Activated naive CD4-positive, alpha-beta T cell treated with anti-CD3 and anti-CD28 coated beads, Interleukin-2, amount 10 ng/mL, durations not matched to agents 7 days and 5 days (primary cell): ENCODE measurements at regions of chr18 and their contacts with region 1.

Region 1: GRCh38 chr18:46660955-46661749 is 4.1 kb upstream of the LOXHD1 start:
- DNase-seq: no peak
- H3K4me3 Mint-ChIP-seq: no peak overlapping the region
- H3K27ac Mint-ChIP-seq: no peak overlapping the region
- H3K4me1 Mint-ChIP-seq: no peaks in the 10 kb centered on the region
- H3K27me3 Mint-ChIP-seq: peaks cover 18% of the 10 kb centered on the region

Region 2: GRCh38 chr18:46148810-46149209 is 512.3 kb before region 1 on chr18:
- CTCF ChIA-PET with region 1: interaction called, 50 read pairs
- DNase-seq: peak; percentile 69
- H3K4me3 Mint-ChIP-seq: no peak overlapping the region
- H3K27ac Mint-ChIP-seq: peak overlapping the region; percentile 75
- H3K4me1 Mint-ChIP-seq: peaks cover 50% of the 10 kb centered on the region
- H3K27me3 Mint-ChIP-seq: no peaks in the 10 kb centered on the region

Region 3: DNA sequence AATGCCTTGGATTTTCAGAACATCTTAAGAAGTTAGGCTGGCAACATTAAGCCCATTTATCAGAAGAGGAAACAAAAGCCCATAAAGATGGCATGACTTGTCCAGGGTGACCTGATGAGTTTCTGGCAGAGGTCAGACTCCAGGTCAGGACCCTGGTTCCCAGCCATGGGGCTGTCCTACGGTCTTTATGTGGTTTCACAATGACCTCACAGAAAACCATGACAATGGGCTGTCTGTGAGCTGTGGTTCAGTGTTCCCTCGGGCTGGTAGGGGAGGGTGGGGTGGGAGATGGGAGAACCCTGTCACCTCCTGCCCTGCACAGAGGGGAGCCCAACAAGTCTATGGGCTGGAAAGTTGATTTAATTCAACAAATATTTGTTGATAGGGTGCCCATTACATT is 105.9 kb before region 1 on chr18:
- CTCF ChIA-PET with region 1: interaction called, 16 read pairs
- DNase-seq: no peak
- H3K4me3 Mint-ChIP-seq: no peak overlapping the region
- H3K27ac Mint-ChIP-seq: no peak overlapping the region
- H3K4me1 Mint-ChIP-seq: no peaks in the 10 kb centered on the region
- H3K27me3 Mint-ChIP-seq: peaks cover 4% of the 10 kb centered on the region

Region 4: GRCh38 chr18:46601141-46601805 is 59.9 kb before region 1 on chr18:
- CTCF ChIA-PET with region 1: no interaction called
- DNase-seq: no peak
- H3K4me3 Mint-ChIP-seq: no peak overlapping the region
- H3K27ac Mint-ChIP-seq: no peak overlapping the region
- H3K4me1 Mint-ChIP-seq: no peaks in the 10 kb centered on the region
- H3K27me3 Mint-ChIP-seq: peaks cover 19% of the 10 kb centered on the region

Region 5: GRCh38 chr18:46622999-46623398 is 38.2 kb before region 1 on chr18:
- CTCF ChIA-PET with region 1: interaction called, 10 read pairs
- DNase-seq: no peak
- H3K4me3 Mint-ChIP-seq: no peak overlapping the region
- H3K27ac Mint-ChIP-seq: peak overlapping the region; percentile 88
- H3K4me1 Mint-ChIP-seq: peaks cover 43% of the 10 kb centered on the region
- H3K27me3 Mint-ChIP-seq: peaks cover 23% of the 10 kb centered on the region

Region 6: DNA sequence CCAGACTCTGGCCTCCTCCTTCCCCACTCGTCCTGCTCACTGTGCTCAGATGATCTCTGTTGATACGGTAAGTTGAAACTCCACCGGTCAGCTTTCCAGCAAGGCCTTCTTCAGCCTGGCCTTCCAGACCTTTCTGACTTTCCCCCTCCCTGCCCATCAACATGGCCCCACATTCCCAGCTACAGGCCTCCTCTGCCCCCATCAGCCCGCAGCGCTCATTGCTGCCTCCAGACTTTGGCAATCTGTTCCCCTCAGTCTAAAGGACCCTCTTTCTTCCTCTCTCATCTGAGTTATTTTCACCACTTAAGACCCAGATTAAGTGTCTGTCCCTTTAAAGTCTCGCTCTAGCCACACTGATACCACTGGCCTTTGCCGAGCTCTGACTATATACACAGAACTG is 14.7 kb before region 1 on chr18:
- CTCF ChIA-PET with region 1: interaction called, 14 read pairs
- DNase-seq: no peak
- H3K4me3 Mint-ChIP-seq: no peak overlapping the region
- H3K27ac Mint-ChIP-seq: no peak overlapping the region
- H3K4me1 Mint-ChIP-seq: no peaks in the 10 kb centered on the region
- H3K27me3 Mint-ChIP-seq: peaks cover 36% of the 10 kb centered on the region